Activated CD4-positive, alpha-beta memory T cell treated with anti-CD3 and anti-CD28 coated beads for 36 hours (primary cell): ENCODE measurements at regions of chr1 and their contacts with region 1.

Region 1: DNA sequence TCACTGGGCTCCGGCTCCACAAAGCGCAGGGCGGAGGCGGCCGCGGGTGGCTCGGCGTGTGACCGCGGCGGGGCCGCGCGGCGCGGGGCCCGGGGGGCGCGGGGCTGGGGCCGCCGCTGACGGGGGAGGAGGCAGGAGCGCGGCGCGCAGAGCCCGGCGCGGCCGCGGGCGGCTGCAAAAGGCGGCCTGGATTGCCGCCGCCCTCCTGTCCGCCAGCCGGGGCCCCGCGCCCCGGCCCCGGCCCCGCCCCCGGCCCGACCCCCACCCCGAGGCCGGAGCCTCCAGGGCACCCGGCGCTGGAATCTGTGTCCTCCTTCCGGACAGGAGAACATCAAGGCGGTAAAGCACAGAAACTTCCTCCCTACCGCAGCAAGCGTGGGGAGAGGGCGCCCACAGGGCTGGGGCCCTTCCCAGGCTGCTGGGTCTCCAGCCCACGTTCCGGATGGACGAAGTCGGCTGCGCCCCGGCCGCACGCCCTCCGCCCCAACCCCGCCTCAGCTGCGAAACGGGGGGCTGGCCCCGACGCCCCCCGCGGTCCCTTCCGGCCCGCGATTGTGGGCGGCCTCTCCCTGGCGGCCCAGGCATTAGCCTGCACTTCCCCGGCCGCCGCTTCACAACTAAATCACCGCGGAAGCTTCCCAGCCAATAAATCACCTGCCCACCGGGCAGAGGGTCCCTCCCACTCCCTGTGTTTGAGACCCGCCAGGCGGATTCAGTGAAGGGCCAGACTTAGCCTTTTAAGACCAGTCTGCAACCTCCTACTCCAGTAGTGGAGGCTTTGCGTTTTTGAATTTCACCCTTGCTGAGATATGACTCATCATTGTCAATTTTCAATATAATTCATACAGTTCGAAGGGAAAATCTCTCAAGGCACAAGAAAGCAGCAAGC is 106.0 kb downstream of the SLC45A1 start:
- DNase-seq: peak; percentile 74
- H3K4me3 Mint-ChIP-seq: peak overlapping the region; percentile 85
- H3K27ac Mint-ChIP-seq: peak overlapping the region; percentile 96
- H3K4me1 Mint-ChIP-seq: peaks cover 41% of the 10 kb centered on the region
- H3K27me3 Mint-ChIP-seq: no peaks in the 10 kb centered on the region

Region 2: DNA sequence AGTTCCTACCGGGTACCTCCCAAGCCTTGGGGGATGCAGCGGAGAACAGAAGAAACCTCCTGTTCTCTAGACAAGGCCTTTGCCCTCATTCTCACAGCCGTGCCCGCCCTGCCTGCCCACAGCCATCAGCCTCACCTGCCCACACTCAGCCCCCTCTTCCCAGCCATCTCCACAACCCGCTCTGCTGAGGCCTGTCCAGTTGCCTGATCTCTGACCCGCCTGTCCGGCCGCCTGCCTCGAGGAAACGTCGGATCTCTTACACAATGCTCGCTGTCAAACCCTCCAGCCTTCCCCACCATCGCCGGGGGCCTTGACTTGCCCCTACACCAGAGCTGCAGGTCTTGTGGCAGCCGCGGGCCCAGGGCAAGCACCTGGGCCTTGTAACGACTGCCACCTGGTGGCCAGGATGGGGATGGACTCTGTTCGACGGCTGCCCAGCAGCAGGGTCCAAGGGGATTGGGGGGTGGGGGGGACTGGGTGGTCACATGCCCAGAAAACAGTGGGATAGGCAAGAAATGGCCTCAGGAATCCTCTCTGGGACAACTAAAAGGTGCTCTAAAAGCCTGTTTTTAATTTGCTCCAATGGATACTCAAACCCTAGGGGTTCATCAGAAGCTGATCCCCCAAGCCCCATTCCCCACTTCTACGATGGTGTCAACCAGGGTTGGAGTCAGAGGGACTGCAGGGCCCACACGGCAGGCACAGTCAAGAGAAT is 75.0 kb before region 1 on chr1:
- CTCF ChIA-PET with region 1: no interaction called
- POLR2A ChIA-PET with region 1: no interaction called
- intact Hi-C with region 1: no loop called
- DNase-seq: peak; percentile 76
- H3K4me3 Mint-ChIP-seq: no peak overlapping the region
- H3K27ac Mint-ChIP-seq: no peak overlapping the region
- H3K4me1 Mint-ChIP-seq: peaks cover 2% of the 10 kb centered on the region
- H3K27me3 Mint-ChIP-seq: peaks cover 2% of the 10 kb centered on the region

Region 3: DNA sequence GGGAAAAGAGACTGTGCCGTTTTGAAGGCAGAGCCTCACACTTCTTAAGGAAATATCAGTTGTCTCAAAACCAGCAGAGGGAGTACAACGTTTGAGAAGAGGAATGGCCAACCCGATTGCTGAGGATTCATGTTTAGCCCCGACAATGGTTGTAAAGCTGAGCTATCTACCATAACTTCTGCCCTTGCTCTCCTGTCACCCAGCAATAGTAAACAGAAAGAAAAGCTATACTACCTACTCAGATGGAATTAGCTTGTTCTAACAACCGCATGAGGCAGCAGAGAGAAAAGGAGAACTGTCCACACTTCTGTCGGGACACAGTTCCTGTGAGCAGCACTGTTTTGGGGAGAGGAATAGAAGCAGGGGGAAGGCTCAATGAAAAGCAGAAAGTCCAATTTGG is 14.8 kb before region 1 on chr1:
- CTCF ChIA-PET with region 1: interaction called, 33 read pairs
- POLR2A ChIA-PET with region 1: interaction called, 7 read pairs
- intact Hi-C with region 1: loop called (anchors 2 kb)
- DNase-seq: peak; percentile 25
- H3K4me3 Mint-ChIP-seq: peak overlapping the region; percentile 25
- H3K27ac Mint-ChIP-seq: peak overlapping the region; percentile 83
- H3K4me1 Mint-ChIP-seq: peaks cover 77% of the 10 kb centered on the region
- H3K27me3 Mint-ChIP-seq: no peaks in the 10 kb centered on the region

Region 4: DNA sequence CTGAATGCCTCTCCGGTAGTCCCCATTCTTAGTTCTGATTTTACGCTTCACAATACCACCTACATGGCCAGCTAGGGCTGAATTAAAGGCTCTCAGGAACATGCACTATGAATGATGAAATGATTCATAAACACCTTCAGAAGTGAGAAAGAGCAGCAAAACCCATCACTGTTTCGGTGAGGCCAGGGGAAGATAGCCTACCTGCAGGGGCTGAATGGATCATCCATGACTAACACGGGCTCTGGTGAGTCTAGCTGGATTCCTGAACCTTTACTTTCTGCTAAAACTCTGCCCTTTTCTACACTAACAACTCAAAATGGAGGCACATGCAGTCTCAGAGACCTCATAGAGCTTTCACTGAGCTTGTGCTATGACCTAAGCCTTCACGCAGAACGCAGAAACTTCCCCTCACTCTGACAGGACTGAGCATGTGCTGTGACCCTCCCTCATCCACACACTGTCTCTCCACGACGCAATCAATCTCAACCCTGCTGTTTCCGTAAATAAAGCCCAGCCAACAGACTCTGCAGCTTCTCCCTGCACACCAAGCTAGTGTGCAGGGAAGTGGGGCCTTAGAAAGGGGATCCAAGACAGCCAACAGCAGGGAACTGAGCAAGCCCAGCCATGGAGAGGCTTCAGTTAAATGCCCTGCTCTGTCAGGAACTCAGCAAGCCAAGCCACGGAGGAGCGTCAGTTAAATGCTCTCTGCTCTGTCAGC is 101.8 kb after region 1 on chr1:
- CTCF ChIA-PET with region 1: interaction called, 4 read pairs
- POLR2A ChIA-PET with region 1: interaction called, 10 read pairs
- intact Hi-C with region 1: loop called (anchors 1 kb)
- DNase-seq: peak; percentile 85
- H3K4me3 Mint-ChIP-seq: no peak overlapping the region
- H3K27ac Mint-ChIP-seq: no peak overlapping the region
- H3K4me1 Mint-ChIP-seq: peaks cover 18% of the 10 kb centered on the region
- H3K27me3 Mint-ChIP-seq: no peaks in the 10 kb centered on the region

Region 5: DNA sequence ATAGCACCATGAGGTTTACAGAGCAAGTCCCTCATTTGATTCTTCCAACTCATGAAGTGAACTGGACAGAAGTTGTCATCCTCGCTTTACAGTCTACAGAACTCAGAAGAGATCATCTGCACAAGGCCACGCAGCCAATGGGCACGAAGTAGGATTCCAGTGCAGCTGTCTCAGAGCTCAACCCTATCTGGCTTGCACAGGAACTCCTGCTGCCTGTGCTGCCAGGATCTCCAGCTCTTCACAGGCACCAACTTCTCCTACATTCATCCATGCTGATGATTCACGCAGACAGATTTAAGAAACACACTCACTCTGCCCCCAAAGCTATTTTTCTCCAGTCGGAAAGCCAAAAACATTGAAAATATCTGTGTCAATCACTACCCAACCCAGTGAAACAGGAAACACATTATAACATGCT is 236.5 kb after region 1 on chr1:
- CTCF ChIA-PET with region 1: no interaction called
- POLR2A ChIA-PET with region 1: no interaction called
- intact Hi-C with region 1: loop called (anchors 5 kb)
- DNase-seq: no peak
- H3K4me3 Mint-ChIP-seq: no peak overlapping the region
- H3K27ac Mint-ChIP-seq: no peak overlapping the region
- H3K4me1 Mint-ChIP-seq: peaks cover 3% of the 10 kb centered on the region
- H3K27me3 Mint-ChIP-seq: no peaks in the 10 kb centered on the region

Region 6: DNA sequence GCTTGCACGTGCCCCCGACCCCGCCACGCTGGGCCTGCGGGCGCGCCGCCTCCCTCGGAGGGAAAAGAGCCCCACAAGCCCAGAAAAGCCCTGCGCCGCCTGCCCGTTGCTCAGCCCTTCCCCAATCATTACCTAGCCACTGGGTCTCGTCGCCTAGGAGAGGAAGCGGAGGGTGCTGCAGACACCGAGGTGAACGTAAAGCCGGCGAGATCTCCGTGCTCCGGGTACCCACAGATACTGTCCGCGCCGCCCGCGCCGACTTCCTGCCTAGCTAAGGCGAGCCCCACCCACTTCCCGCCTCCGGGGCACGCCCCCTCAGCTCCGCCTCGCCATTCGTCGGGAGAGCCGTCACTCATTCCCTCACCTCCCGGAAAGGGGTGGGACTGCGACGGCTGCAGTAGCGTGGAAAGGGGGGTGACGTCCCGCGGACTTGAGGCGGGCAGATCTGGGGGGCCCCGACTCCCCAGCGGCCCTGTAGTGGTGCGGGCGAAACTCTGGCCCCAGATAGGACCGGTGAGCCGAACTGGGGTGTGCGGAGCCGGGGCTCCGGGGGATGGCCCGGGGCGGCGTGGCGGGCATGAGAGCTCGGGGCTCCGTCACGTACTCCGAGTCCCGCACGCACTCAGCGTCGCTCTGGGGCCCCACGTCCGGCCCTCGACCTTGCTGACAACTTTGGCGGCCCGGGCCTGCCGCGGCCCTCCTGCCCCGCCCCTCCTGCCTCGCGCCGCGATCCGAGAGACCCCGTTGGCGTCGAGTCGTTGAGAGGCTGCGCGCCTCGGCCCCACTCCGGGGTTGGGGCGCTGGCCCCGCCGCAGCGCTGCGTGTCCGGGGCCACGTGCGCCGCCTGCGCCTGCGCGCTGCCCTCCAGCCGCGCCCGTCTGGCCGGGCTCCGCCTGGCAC is 454.8 kb after region 1 on chr1 and contains the start of gene ENO1:
- CTCF ChIA-PET with region 1: no interaction called
- POLR2A ChIA-PET with region 1: interaction called, 3 read pairs
- intact Hi-C with region 1: loop called (anchors 10 kb)
- DNase-seq: peak; percentile 99
- H3K4me3 Mint-ChIP-seq: peak within 1 kb of the TSS; percentile 95
- H3K27ac Mint-ChIP-seq: peak within 1 kb of the TSS; percentile 100
- H3K4me1 Mint-ChIP-seq: peaks cover 31% of the 10 kb centered on the region
- H3K27me3 Mint-ChIP-seq: peaks cover 2% of the 10 kb centered on the region
- total RNA-seq, gene ENO1: 3,008 to 3,028 TPM